BJ (cell line): ENCODE measurements at regions of chrX and their contacts with region 1.

Region 1: GRCh38 chrX:153909024-153909970 is 4.8 kb downstream of the AVPR2 start:
- DNase-seq: no peak
- H3K4me3 ChIP-seq: no peak overlapping the region
- H3K27me3 ChIP-seq: no peaks in the 10 kb centered on the region
- CTCF ChIP-seq: no peak

Region 2: DNA sequence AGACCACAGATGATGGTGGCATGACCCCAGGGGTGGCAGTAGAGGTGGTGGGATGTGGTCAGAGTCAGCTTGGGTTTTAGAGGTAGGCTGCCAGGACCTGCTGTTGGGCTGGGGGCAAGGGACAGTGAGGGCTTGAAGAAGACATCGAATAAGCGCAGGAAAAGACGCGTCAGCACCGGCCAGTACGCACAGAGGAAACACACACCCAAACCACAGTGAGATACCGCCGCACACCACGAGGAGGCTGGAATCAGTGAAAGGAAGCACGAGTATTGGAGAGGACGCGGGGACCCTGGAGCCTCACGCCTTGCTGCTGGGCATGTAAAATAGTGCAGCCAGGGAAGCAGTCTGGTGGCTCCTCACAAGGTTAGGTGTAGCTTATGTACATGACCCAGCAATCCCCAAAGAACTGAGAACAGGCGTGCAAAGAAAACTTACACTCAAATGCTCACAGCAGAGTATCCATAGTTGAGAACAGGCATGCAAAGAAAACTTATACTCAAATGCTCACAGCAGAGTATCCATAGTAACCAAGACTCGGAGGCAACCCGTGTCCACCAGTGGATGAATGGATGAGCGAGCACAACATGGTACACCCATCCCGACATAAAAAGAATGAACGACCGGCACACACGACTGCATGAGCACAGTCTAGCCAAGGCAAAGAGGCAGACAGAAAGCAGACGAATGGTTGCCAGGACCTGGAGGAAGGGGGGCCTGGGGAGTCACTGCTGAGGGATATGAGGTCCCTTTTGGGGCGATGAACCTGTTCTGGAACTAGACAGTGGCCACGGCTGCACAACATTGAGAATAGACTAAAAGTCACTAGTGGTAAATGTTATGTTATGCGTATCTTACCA is 92.2 kb before region 1 on chrX:
- CTCF ChIA-PET with region 1: no interaction called
- POLR2A ChIA-PET with region 1: no interaction called
- DNase-seq: no peak
- H3K4me3 ChIP-seq: no peak overlapping the region
- H3K27me3 ChIP-seq: no peaks in the 10 kb centered on the region; the same call in 1 of the 2 replicates
- CTCF ChIP-seq: no peak

Region 3: GRCh38 chrX:153926858-153927671 is 17.8 kb after region 1 on chrX:
- CTCF ChIA-PET with region 1: interaction called, 26 read pairs
- POLR2A ChIA-PET with region 1: no interaction called
- DNase-seq: no peak
- H3K4me3 ChIP-seq: peak overlapping the region; percentile 54
- H3K27me3 ChIP-seq: no peaks in the 10 kb centered on the region
- CTCF ChIP-seq: no peak